Heart left ventricle (tissue), 16 donors: ENCODE measurements at regions of chr16 and their contacts with region 1.

Region 1: GRCh38 chr16:35365675-35366074 is 1906.3 kb downstream of the TP53TG3F start:
- DNase-seq: no peak
- ATAC-seq: no peak
- H3K4me3 ChIP-seq: no peak overlapping the region
- H3K27ac ChIP-seq: no peak overlapping the region
- H3K4me1 ChIP-seq: no peaks in the 10 kb centered on the region
- H3K27me3 ChIP-seq: no peaks in the 10 kb centered on the region
- CTCF ChIP-seq: no peak
- POLR2A ChIP-seq: no peak

Region 2: DNA sequence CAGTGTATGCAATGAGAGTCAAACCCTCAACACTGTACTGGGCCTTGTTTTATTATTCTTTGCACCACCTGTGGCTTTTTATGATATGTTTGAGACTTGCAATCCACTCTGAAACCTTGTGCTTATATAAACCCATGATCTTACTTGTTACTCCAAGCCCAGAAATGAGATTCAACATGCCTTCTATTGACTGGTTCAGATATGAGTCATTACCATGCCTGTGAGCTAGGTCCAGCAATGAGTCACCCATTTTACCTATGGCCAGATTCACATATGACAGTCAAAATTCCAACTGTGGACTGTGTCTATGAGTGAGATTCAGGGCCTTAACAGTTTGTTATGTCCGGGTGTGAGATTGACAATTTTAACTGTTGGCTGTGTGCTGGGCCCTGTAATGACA is 60.2 kb before region 1 on chr16:
- intact Hi-C with region 1: loop called in 1 of 10 experiments (anchors 10 kb)
- DNase-seq: no peak
- ATAC-seq: no peak
- H3K4me3 ChIP-seq: no peak overlapping the region
- H3K27ac ChIP-seq: no peak overlapping the region
- H3K4me1 ChIP-seq: no peaks in the 10 kb centered on the region
- H3K27me3 ChIP-seq: no peaks in the 10 kb centered on the region
- CTCF ChIP-seq: no peak
- POLR2A ChIP-seq: no peak

Region 3: GRCh38 chr16:35414563-35414962 is 48.9 kb after region 1 on chr16:
- intact Hi-C with region 1: no loop called
- DNase-seq: no peak
- ATAC-seq: no peak
- H3K4me3 ChIP-seq: no peak overlapping the region
- H3K27ac ChIP-seq: no peak overlapping the region
- H3K4me1 ChIP-seq: no peaks in the 10 kb centered on the region
- H3K27me3 ChIP-seq: no peaks in the 10 kb centered on the region
- CTCF ChIP-seq: no peak
- POLR2A ChIP-seq: no peak

Region 4: GRCh38 chr16:35734728-35735402 is 369.2 kb after region 1 on chr16:
- intact Hi-C with region 1: loop called in 1 of 10 experiments (anchors 10 kb)
- DNase-seq: no peak
- ATAC-seq: no peak
- H3K4me3 ChIP-seq: no peak overlapping the region
- H3K27ac ChIP-seq: no peak overlapping the region
- H3K4me1 ChIP-seq: no peaks in the 10 kb centered on the region
- H3K27me3 ChIP-seq: no peaks in the 10 kb centered on the region
- CTCF ChIP-seq: no peak
- POLR2A ChIP-seq: no peak